ENCODE measurements at regions of chr6 and their contacts with region 1.

Region 1: DNA sequence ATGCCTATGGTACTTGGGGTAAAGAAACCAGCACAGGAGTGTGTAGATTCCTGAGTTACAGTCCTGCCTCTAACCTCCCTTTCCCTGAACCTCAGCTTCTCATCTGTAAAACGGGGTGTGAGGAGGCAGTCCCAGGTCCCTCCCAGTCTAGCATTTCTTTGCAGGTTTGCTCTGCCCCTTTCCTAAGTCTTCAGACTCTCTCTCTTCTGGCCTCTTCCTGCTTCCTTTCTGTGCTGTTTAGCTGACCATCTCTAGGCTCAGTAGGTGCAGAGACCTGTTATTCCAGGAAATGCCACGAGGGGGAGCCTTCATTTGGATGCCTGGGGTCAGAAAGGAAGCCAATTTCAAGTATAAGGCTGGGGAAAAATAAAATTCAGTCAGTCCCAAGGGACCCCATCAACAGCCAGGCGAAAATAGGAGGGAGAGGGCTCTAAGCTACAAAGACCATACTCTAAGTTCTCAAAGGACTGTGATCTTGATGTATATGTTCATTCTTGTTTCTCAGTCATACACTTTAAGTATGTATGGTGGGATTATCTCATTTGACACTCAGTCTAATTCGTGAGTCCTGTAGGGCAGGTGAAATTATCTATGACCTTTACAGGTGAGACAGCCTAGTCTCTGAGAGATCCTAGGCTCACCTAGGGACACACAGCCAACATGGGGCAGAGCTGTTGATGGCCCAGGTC is 89.1 kb downstream of the NCR2 start:
- DNase-seq: peak; percentile 84
- H3K4me3 ChIP-seq: no peak overlapping the region
- H3K27ac ChIP-seq: no peak overlapping the region
- H3K4me1 ChIP-seq: peaks cover 8% of the 10 kb centered on the region
- H3K27me3 ChIP-seq: no peaks in the 10 kb centered on the region
- CTCF ChIP-seq: peak; percentile 60 to 87 (median 81)
- POLR2A ChIP-seq: no peak

Region 2: DNA sequence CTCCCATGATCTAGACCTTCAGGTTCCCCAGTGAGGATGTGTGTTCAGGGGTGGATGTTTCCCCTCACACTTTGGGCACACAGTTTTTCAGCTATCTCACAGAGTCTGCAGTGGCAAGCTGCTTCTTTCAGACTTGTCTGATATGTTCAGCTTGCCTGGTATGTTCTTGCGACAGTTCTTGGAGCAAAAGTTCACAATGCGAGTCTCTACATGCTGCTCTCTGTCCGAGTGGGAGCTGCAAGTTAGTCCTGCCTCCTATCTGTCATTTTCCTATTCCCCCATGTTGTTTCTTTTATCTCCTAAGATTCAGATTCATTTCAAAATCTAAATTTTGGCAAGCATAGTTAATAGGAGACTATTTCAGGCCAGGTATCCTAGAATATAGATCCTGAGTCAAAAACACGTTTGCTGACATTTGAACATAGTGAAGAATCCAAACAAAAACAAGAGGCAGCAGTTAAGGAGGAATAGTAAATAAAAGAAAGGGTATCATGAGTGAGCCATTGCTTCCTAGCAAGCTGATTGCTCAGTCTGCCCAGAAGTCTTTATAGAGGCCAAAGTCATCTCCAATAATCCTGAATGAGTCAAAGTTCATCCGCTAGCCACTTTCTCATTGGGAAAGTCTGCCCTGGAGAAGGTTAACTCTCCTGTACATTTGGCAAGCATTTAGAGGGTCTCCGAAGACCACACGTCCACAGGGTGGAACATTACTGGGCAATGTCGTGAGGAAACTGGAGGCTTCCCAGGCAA is 1350.0 kb before region 1 on chr6:
- intact Hi-C with region 1: no loop called
- DNase-seq: peak; percentile 40
- H3K4me3 ChIP-seq: no peak overlapping the region
- H3K27ac ChIP-seq: no peak overlapping the region
- H3K4me1 ChIP-seq: no peaks in the 10 kb centered on the region
- H3K27me3 ChIP-seq: no peaks in the 10 kb centered on the region
- CTCF ChIP-seq: peak in 2 of 4 experiments; percentile 9 to 27
- POLR2A ChIP-seq: no peak

Region 3: DNA sequence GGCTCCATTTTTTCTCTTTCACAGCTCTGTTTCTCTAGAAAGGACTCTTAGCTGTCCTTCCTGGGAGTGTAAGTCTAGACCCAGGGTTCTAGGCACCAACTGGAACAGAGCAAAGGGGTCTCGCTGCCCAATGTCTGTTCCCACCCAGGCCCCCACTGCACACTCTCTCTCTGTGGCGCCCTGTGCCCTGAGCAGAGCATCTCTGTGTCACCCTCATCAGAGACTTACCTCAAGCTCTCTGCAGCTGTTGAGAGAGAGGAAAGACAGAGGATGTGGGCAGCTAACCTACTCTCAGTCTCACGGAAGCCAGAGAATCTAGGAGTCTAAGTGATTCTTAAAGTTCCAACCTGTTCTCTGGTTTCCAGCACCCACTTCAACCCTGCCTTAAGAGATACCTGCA is 79.6 kb before region 1 on chr6:
- intact Hi-C with region 1: no loop called
- DNase-seq: no peak
- H3K4me3 ChIP-seq: no peak overlapping the region
- H3K27ac ChIP-seq: no peak overlapping the region
- H3K4me1 ChIP-seq: no peaks in the 10 kb centered on the region
- H3K27me3 ChIP-seq: no peaks in the 10 kb centered on the region
- CTCF ChIP-seq: no peak
- POLR2A ChIP-seq: no peak

Region 4: GRCh38 chr6:41367700-41368099 is 56.8 kb before region 1 on chr6:
- intact Hi-C with region 1: loop called (anchors 5 kb)
- DNase-seq: peak; percentile 34
- H3K4me3 ChIP-seq: no peak overlapping the region
- H3K27ac ChIP-seq: no peak overlapping the region
- H3K4me1 ChIP-seq: peaks cover under 1% of the 10 kb centered on the region
- H3K27me3 ChIP-seq: no peaks in the 10 kb centered on the region
- CTCF ChIP-seq: peak in 3 of 4 experiments; percentile 48 to 68 (median 65)
- POLR2A ChIP-seq: no peak

Region 5: DNA sequence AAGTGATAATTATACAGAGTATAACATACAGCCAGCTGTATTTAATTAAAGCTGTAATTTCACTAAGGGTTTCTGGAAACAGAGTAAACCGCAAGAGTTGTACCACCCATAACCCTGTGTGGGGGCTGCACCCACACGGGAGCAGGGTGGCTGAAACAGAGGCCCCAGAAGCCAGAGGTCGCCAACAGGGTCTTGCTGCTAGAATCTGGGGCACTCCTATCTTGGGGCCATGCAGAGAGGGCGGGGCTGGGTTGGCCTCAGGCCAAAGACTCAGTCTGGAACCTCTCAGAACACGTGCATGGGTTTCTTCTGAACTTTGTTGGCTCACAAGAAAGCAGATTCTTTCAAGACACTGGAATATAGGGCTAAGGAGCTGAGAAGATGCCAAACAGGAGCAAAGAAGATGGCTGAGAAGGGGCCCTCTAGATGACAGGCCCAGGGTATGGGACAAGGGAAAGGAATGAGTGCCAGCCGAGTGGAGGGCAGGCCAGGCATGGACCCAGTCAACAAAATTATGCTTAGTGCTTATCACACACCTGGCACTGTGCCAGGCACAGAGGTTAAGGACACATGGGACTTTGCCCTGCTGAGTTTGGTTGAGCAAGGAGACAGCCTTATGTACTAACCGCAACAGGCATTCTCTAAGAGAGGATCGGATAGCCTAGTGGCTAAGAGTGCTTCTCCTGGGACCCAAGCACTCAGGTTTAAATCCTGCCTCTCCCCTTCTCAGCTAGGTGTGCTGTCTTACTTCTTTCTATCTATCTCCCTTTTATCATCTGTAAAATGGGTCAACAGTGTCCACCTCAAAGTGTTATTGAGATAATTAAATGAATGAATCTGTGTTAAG is 25.1 kb after region 1 on chr6:
- intact Hi-C with region 1: loop called (anchors 2 kb)
- DNase-seq: no peak
- H3K4me3 ChIP-seq: no peak overlapping the region
- H3K27ac ChIP-seq: peak overlapping the region in 1 of 2 donors; percentile 20
- H3K4me1 ChIP-seq: no peaks in the 10 kb centered on the region
- H3K27me3 ChIP-seq: no peaks in the 10 kb centered on the region
- CTCF ChIP-seq: no peak
- POLR2A ChIP-seq: no peak

Region 6: GRCh38 chr6:41455818-41456217 is 31.3 kb after region 1 on chr6:
- intact Hi-C with region 1: loop called (anchors 5 kb)
- DNase-seq: no peak
- H3K4me3 ChIP-seq: no peak overlapping the region
- H3K27ac ChIP-seq: peak overlapping the region in 1 of 2 donors; percentile 53
- H3K4me1 ChIP-seq: peaks cover 3% of the 10 kb centered on the region
- H3K27me3 ChIP-seq: no peaks in the 10 kb centered on the region
- CTCF ChIP-seq: no peak
- POLR2A ChIP-seq: no peak

Region 7: DNA sequence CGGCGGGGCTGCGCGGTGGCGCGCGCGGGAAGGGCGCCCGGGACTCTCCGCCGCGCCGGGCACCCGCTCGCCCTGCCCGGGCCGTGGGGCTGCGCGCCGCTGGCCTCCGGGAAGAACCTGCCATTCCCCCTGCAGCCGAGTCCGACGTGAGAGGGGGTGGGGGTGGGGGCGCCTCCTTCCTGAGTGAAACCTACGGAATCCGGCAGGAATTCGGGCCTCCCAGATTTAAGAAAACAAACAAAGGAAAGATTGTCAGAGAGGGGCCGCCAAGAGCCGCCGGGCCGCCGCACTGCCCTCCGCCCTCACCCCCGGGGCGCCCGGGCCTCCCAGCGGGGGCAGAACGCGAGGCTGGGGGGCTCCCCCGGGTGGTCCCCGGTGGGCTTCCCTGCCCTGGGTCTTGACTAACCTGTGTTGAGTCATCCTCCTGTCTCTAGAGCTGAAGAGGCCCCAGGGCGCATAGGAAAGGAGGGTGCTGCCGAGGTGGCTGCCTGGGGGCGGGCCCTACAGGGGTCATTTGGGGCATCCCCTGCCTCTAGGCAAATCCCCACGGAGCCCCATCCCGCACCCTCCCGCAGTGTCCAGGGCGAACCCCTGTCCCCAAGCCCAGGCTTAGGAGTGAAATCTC is 79.4 kb after region 1 on chr6:
- intact Hi-C with region 1: loop called (anchors 1 kb)
- DNase-seq: no peak
- H3K4me3 ChIP-seq: peak overlapping the region; percentile 28 to 31
- H3K27ac ChIP-seq: peak overlapping the region; percentile 47 to 70
- H3K4me1 ChIP-seq: peaks cover 2% of the 10 kb centered on the region
- H3K27me3 ChIP-seq: no peaks in the 10 kb centered on the region
- CTCF ChIP-seq: no peak
- POLR2A ChIP-seq: no peak

Region 8: GRCh38 chr6:41545703-41546474 is 121.4 kb after region 1 on chr6 and contains the start of gene FOXP4:
- intact Hi-C with region 1: loop called (anchors 5 kb)
- DNase-seq: peak; percentile 93
- H3K4me3 ChIP-seq: peak within 1 kb of the TSS; percentile 59 to 90
- H3K27ac ChIP-seq: peak within 1 kb of the TSS; percentile 72 to 86
- H3K4me1 ChIP-seq: peaks cover 3% of the 10 kb centered on the region
- H3K27me3 ChIP-seq: no peaks in the 10 kb centered on the region
- CTCF ChIP-seq: no peak
- POLR2A ChIP-seq: no peak
- total RNA-seq, gene FOXP4: 24.8 to 53.5 TPM